Right cardiac atrium (tissue), 5 donors: ENCODE measurements at regions of chr2 and their contacts with region 1.

Region 1: DNA sequence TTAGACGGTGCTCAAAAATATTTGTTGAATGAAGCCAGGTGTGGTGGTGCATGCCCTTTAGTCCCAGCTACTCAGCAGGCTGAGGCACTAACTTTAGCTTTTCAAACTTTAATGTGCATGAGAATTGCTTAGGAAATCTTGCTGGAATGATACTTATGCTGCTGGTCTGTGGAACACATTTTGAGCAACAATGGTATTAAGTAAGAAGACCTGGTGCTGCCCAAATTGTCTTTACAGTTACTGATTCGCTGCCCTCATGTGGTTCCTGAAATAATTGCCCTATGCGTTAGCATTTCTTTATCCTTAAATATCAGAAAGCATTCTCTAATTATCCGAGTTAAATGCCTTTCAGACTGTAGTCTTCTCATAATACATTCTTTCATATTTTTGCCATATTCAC is 76.0 kb upstream of the SESTD1 start:
- DNase-seq: no peak
- ATAC-seq: peak in 1 of 2 donors; percentile 19
- H3K4me3 ChIP-seq: no peak overlapping the region
- H3K27ac ChIP-seq: no peak overlapping the region
- H3K4me1 ChIP-seq: no peaks in the 10 kb centered on the region
- H3K27me3 ChIP-seq: no peaks in the 10 kb centered on the region

Region 2: GRCh38 chr2:179218848-179219594 is 121.6 kb before region 1 on chr2:
- intact Hi-C with region 1: loop called in 2 of 4 experiments (anchors 10 kb)
- DNase-seq: peak; percentile 71 to 89 (median 74)
- ATAC-seq: peak; percentile 94 to 96
- H3K4me3 ChIP-seq: no peak overlapping the region
- H3K27ac ChIP-seq: no peak overlapping the region
- H3K4me1 ChIP-seq: peaks cover 1% of the 10 kb centered on the region
- H3K27me3 ChIP-seq: no peaks in the 10 kb centered on the region

Region 3: GRCh38 chr2:179226203-179226960 is 114.3 kb before region 1 on chr2:
- intact Hi-C with region 1: loop called in 1 of 4 experiments (anchors 10 kb)
- DNase-seq: peak in 2 of 3 donors; percentile 27 to 48
- ATAC-seq: no peak
- H3K4me3 ChIP-seq: no peak overlapping the region
- H3K27ac ChIP-seq: no peak overlapping the region
- H3K4me1 ChIP-seq: peaks cover 6% of the 10 kb centered on the region
- H3K27me3 ChIP-seq: no peaks in the 10 kb centered on the region

Region 4: DNA sequence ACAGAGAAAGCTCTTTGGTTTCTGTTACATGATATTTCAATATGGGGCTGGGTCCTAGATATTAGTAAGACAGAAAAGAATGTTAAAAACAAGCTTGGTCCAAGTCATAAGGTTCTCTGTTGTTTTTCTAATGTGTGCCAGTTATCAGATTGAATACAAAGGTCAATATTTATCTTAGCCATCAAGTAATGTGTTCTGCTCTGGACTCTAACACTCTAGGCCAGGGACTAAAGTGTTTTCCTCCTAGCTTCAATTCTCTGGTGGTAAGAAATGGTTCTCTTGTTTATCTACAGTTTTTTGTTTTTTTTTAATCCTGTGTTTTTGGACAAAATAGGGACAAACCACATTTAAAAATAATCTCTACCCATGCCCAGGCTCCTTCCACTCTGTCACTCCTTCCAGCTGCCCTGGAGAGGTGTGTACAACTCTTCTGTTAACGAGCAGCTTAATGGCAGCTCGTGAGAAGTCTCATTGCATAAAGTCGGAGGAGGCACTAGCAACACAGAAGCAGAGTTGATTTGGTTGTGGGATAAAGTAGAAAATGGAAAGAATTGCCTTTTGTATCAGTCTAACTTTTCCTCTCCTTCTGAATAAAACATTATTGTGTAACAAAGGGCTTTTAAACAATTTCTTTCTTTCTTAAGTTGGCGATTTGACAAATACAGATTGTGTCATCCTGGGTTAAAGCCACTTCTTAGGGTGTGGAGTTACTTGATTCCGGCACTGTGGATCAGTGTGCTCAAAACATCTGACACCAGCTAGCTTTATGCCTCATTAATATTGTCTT is 68.1 kb before region 1 on chr2:
- intact Hi-C with region 1: loop called in 1 of 4 experiments (anchors 10 kb)
- DNase-seq: peak in 1 of 3 donors; percentile 38
- ATAC-seq: peak; percentile 84 to 88
- H3K4me3 ChIP-seq: no peak overlapping the region
- H3K27ac ChIP-seq: peak overlapping the region; percentile 87
- H3K4me1 ChIP-seq: no peaks in the 10 kb centered on the region
- H3K27me3 ChIP-seq: no peaks in the 10 kb centered on the region